Activated CD4-positive, alpha-beta T cell treated with anti-CD3 and anti-CD28 coated beads, Interleukin-2, amount 10 ng/mL, durations not matched to agents 7 days and 5 days (primary cell): ENCODE measurements at regions of chr1 and their contacts with region 1.

Region 1: DNA sequence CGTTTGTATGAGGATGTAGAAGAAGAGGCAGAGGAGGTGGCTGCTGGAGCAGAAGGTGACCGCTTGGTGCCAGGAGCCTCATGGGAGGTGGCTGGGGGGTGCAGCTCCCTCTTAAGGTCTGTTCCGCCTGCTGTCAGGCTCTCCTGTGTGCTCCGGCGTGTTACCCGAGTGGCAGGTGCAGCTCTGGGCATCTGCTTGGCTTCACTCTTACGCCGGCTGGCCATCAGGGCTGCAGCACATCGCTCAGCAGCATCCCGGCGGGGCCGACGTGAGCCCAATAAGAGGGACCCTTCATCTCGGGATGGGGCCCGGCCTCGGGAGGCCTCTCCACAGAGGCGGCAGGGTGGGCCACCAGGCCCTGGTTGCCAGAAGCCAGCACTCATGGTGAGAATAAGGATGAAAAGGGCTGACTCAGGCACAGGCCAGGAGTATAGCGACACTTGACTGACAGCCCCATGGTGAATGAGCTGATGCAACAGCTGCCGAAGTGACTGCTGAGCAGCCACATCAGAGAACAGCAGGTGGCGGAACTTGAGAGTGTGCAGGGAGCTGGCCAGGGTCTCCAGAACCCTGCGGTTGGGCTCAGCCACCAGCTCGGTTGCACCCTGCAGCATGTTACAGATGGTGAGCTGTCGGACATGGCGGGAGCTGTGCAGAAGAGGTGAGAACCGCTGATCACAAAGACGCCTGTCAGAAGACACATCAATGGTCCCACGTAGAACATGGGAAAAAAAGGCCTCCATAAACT is 17.5 kb downstream of the LRRC41 start:
- DNase-seq: peak; percentile 65
- H3K4me3 Mint-ChIP-seq: no peak overlapping the region
- H3K27ac Mint-ChIP-seq: peak overlapping the region; percentile 84
- H3K4me1 Mint-ChIP-seq: peaks cover 31% of the 10 kb centered on the region
- H3K27me3 Mint-ChIP-seq: no peaks in the 10 kb centered on the region

Region 2: DNA sequence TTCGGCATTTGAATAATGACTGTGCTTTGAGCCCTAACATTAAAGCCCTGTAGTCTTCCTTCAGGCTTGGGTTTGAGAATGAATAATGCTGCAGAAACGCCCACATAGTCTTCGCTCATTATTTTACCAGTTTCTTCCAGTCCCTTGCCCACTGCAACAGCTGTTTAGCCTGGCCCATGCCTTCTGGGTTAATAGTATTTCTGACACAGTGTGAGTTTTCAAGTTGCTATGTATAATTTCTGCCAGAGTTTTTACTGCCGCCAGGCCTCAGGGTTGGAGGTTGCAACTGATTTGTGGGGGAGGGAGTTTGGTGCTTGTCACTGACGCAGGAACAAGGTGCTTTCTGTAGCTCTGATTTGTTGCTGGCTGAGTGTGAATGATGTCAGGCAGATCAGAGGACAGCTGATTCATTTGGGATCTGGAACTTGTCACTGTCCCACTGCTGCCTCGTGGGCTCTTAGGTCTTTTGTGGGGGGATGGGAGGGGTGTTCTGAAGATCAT is 372.7 kb before region 1 on chr1:
- CTCF ChIA-PET with region 1: no interaction called
- POLR2A ChIA-PET with region 1: no interaction called
- DNase-seq: no peak
- H3K4me3 Mint-ChIP-seq: no peak overlapping the region
- H3K27ac Mint-ChIP-seq: no peak overlapping the region
- H3K4me1 Mint-ChIP-seq: no peaks in the 10 kb centered on the region
- H3K27me3 Mint-ChIP-seq: no peaks in the 10 kb centered on the region

Region 3: DNA sequence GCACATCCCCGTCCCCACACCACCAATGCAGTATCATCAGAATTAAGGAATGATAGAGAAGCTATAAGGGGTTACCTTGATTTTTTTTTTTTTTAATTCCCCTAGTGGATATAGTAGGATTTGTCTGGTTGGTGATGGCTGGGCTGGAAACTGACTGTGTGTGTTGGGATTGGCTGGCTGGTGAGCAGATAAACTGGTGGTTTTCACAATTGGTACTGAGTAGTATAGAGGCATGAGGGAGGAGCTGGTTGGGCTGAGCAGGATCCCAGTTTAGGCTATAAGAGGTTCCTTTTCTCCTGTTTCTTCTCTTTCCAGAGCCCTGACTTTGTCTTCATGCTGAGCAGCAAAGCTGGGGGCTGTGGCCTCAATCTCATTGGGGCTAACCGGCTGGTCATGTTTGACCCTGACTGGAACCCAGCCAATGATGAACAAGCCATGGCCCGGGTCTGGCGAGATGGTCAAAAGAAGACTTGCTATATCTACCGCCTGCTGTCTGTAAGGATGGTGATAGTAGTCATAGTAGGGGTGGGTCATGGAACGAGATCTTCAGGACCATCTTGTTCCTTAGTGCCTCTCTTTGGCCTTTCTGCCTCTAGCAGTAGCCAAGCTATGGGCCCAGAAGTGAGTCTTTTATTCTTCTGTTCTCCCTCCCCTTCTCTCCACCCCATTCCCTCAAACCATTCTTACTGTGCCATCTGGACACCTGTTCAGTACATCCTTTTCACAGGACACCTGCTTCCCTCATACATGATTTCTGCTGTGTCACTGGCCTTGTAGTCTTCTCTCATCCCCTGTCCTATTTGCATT is 11.5 kb before region 1 on chr1:
- CTCF ChIA-PET with region 1: interaction called, 10 read pairs
- POLR2A ChIA-PET with region 1: no interaction called
- DNase-seq: no peak
- H3K4me3 Mint-ChIP-seq: no peak overlapping the region
- H3K27ac Mint-ChIP-seq: peak overlapping the region; percentile 10
- H3K4me1 Mint-ChIP-seq: no peaks in the 10 kb centered on the region
- H3K27me3 Mint-ChIP-seq: no peaks in the 10 kb centered on the region

Region 4: GRCh38 chr1:46298387-46298786 is 12.5 kb after region 1 on chr1:
- CTCF ChIA-PET with region 1: interaction called, 10 read pairs
- POLR2A ChIA-PET with region 1: no interaction called
- DNase-seq: no peak
- H3K4me3 Mint-ChIP-seq: no peak overlapping the region
- H3K27ac Mint-ChIP-seq: no peak overlapping the region
- H3K4me1 Mint-ChIP-seq: peaks cover 16% of the 10 kb centered on the region
- H3K27me3 Mint-ChIP-seq: no peaks in the 10 kb centered on the region

Region 5: GRCh38 chr1:46587069-46587468 is 301.2 kb after region 1 on chr1:
- CTCF ChIA-PET with region 1: no interaction called
- POLR2A ChIA-PET with region 1: no interaction called
- DNase-seq: no peak
- H3K4me3 Mint-ChIP-seq: no peak overlapping the region
- H3K27ac Mint-ChIP-seq: no peak overlapping the region
- H3K4me1 Mint-ChIP-seq: peaks cover 33% of the 10 kb centered on the region
- H3K27me3 Mint-ChIP-seq: no peaks in the 10 kb centered on the region